ENCODE measurements at regions of chr17 and their contacts with region 1.

Region 1: GRCh38 chr17:73595479-73595878 is 48.8 kb downstream of the SDK2 start:
- DNase-seq: peak in 3 of 4 experiments; percentile 24 to 27 (median 26)
- ATAC-seq: peak; percentile 40; the same call in 2 of the 3 replicates
- H3K4me3 ChIP-seq: no peak overlapping the region
- H3K27ac ChIP-seq: no peak overlapping the region
- H3K4me1 ChIP-seq: 0 out of 5 replicates have a peak, but pooled peaks cover 0 to 2% of the 10 kb centered on the region in 2 experiments
- H3K27me3 ChIP-seq: peaks cover 12 to 63% of the 10 kb centered on the region in 2 experiments
- CTCF ChIP-seq: peak in 1 of 3 experiments; percentile 11; a peak in 1 of 6 replicates
- EP300 ChIP-seq: no peak
- POLR2A ChIP-seq: no peak
- RAD21 ChIP-seq: no peak

Region 2: DNA sequence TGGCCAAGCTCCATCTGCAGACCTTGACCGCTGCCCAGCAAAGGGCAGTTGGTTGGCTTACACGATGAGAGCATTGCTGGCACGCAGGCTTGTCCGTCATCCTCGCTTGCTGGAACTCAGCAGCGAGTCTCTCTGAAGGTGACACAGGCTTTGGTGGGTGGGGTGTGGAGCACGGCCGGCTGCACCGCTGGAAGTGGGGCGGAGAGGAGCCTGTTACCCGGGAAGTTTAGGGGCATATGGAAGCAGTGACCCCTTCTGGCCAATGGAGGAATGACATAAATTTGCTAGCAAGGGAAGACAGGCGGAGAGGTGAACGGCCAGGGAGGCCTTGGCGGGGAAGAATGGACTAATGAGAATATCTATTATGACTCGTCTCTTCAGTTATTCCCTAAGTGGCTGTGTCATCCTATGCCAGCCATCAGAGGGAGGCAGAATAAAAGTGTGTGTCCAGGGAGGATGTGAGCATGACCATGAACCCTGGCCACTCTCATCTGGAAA is 114.7 kb after region 1 on chr17:
- CTCF ChIA-PET with region 1: no interaction called
- POLR2A ChIA-PET with region 1: interaction called, 4 read pairs
- in situ Hi-C with region 1: no loop called
- intact Hi-C with region 1: loop called (anchors 10 kb)
- DNase-seq: peak; percentile 70 to 84 (median 76)
- ATAC-seq: peak; percentile 87
- H3K4me3 ChIP-seq: no peak overlapping the region
- H3K27ac ChIP-seq: no peak overlapping the region
- H3K4me1 ChIP-seq: no peaks in the 10 kb centered on the region
- H3K27me3 ChIP-seq: peaks cover 0 to 26% of the 10 kb centered on the region in 2 experiments; a peak in 2 of 5 replicates
- CTCF ChIP-seq: peak; percentile 75 to 88 (median 83)
- EP300 ChIP-seq: no peak
- POLR2A ChIP-seq: no peak
- RAD21 ChIP-seq: peak; percentile 79